Activated naive CD4-positive, alpha-beta T cell treated with anti-CD3 and anti-CD28 coated beads for 36 hours (primary cell): ENCODE measurements at regions of chr5 and their contacts with region 1.

Region 1: DNA sequence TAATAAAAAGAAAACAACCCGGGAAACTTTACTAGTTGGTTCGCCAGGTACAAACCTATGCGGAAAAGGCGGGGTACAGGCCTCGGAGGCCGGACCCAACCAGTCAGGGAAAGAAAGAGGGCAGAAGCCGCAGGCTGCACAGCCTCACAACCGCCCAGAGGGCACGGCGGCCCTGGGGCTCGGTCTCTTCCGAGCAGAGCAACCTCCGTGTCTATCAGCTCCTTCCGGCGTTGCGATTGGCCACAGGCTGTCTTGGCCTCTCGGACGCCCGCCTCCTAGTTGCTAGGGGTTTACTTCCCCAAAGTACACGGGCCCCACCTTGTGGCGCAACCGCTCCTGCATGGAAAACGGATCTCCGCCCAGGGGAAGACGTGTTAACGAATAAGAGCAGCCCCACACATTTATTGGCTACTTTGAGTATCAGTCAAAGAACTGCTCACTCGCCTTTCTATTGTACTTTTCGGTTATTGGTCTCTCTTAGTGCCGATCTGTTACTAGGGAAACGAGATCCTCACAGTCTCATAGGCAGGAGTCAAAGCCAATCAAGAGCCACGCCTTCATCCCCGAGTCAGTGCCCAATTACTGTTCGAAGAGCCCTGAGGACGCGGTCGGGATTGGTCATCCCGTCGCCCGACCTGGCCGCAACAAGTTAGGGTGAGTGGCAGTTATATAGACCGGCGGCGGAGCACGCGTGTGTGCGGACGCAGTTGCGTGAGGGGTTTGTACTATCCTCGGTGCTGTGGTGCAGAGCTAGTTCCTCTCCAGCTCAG is at the start of gene G3BP1:
- DNase-seq: peak; percentile 100
- H3K4me3 Mint-ChIP-seq: peak within 1 kb of the TSS; percentile 77
- H3K27ac Mint-ChIP-seq: peak within 1 kb of the TSS; percentile 70
- H3K4me1 Mint-ChIP-seq: peaks cover 33% of the 10 kb centered on the region
- H3K27me3 Mint-ChIP-seq: no peaks in the 10 kb centered on the region
- total RNA-seq, gene G3BP1: 220 to 241 TPM

Region 2: DNA sequence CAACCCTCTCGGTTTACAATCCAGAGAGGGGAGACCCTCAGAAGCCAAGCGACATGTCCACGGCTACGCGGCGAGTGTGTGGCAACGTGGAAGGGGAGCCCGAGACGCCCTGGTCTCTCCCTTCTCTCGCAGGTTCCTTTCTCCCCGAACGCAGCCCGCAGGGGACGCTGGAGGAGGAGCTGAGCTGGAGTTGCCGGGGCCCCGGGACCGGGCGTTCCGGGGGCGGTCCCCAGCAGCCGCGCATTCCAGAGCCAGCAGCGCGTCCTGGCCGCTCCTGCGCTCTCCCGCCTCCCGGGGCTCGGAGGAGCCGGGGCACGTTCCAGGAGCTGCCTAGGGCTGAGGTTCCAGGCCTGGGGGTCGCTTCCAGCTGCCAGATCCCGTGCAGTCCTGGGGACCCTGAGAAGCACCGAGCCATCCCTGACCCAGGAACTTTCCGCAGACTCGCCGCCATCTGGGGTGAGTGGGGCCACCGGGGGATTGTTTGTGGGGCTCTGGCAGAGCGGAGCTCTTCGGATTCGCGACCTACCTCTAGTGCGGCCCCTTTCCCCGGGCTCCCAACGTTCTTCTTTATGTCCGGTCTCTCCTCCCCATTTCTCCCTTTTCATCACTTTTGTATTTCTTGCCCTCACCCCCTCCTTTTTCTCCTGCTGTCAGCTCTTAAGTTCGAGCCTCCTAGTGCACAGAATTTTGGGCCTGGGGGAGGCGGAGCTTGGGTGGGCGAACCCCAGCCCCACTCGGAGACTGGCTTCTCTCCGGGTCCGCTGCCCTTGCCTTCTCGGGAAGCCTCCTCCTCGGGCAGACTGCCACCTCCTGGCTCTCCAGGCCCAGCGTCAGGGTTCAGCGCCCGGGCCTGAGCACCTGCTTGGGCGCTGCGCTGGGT is 992.7 kb before region 1 on chr5 and contains the start of gene SMIM3:
- CTCF ChIA-PET with region 1: no interaction called
- intact Hi-C with region 1: loop called (anchors 5 kb)
- DNase-seq: peak; percentile 86
- H3K4me3 Mint-ChIP-seq: peak within 1 kb of the TSS; percentile 99
- H3K27ac Mint-ChIP-seq: peak within 1 kb of the TSS; percentile 93
- H3K4me1 Mint-ChIP-seq: peaks cover 48% of the 10 kb centered on the region
- H3K27me3 Mint-ChIP-seq: no peaks in the 10 kb centered on the region
- total RNA-seq, gene SMIM3: 32.9 to 37.4 TPM

Region 3: GRCh38 chr5:151252762-151253604 is 518.5 kb before region 1 on chr5 and contains the start of gene GM2A:
- CTCF ChIA-PET with region 1: no interaction called
- intact Hi-C with region 1: loop called (anchors 1 kb)
- DNase-seq: peak; percentile 99
- H3K4me3 Mint-ChIP-seq: peak within 1 kb of the TSS; percentile 89
- H3K27ac Mint-ChIP-seq: peak within 1 kb of the TSS; percentile 90
- H3K4me1 Mint-ChIP-seq: peaks cover 43% of the 10 kb centered on the region
- H3K27me3 Mint-ChIP-seq: no peaks in the 10 kb centered on the region
- total RNA-seq, gene GM2A: 21.1 to 21.8 TPM

Region 4: DNA sequence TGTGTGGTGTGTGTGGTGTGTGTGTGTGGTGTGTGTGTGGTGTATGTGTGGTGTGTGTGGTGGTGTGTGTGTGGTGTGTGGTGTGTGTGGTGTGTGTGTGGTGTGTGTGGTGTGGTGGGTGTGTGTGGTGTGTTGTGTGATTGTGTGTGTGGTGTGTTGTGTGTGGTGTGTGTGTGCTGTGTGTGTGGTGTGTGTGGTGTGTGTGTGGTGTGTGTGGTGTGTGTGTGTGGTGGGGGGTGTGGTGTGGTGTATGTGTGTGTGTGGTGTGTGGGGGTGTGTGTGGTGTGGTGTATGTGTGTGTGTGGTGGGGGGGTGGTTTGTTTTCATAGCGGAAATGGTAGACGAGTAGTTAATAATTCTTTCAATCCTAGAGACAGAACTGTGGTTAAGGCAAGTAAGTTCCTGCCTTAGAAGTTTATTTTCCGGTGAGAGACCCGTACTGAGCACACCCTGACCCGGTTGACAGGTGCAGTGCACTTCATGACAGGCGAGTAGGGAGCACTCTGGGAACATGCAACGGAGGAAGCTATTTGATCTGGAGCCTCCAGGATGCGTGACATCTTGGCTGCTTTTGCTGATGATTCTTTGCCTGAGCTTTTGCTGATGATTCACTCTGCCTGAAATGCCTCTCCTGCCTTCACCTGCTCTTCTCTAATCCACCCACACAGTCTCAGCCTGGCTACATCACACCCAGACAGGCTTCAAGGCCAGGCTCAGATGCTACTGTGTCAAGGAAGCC is 158.6 kb before region 1 on chr5:
- CTCF ChIA-PET with region 1: interaction called, 3 read pairs
- intact Hi-C with region 1: loop called (anchors 2 kb)
- DNase-seq: peak; percentile 82
- H3K4me3 Mint-ChIP-seq: no peak overlapping the region
- H3K27ac Mint-ChIP-seq: peak overlapping the region; percentile 80
- H3K4me1 Mint-ChIP-seq: peaks cover 39% of the 10 kb centered on the region
- H3K27me3 Mint-ChIP-seq: no peaks in the 10 kb centered on the region

Region 5: GRCh38 chr5:151719228-151720000 is 52.0 kb before region 1 on chr5:
- CTCF ChIA-PET with region 1: interaction called, 5 read pairs
- intact Hi-C with region 1: loop called (anchors 1 kb)
- DNase-seq: peak; percentile 55
- H3K4me3 Mint-ChIP-seq: no peak overlapping the region
- H3K27ac Mint-ChIP-seq: no peak overlapping the region
- H3K4me1 Mint-ChIP-seq: peaks cover 12% of the 10 kb centered on the region
- H3K27me3 Mint-ChIP-seq: no peaks in the 10 kb centered on the region

Region 6: DNA sequence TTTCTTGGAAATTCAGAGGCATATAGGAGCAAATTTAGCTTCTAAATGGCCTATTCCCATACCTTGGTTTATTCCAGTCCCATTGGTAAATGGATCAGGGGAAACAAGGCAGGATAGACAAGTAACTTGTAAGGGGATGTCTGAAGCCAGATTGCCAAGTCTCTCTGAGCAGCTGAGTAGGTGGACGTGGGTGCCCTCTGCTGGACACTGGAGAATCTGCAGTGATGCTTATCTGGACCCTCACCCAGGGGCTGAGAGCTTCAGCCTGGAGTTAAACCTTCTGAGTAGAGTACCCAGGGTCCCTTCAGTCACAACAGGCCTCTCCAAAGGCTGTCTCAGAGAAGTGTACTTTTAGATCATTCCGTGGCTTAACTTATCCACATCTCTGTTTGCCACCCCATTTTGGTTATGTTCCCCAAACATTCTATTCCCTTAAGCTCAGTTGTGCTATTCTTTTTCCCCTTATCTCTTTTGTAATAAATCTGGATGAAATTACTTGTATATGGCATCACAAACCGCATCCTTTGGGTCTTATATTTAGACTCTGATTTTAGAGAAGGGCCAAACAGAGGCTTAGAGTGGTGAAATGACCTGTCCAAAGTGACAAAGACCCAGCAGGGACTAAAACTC is 371.5 kb after region 1 on chr5:
- CTCF ChIA-PET with region 1: no interaction called
- intact Hi-C with region 1: loop called (anchors 2 kb)
- DNase-seq: peak; percentile 77
- H3K4me3 Mint-ChIP-seq: no peak overlapping the region
- H3K27ac Mint-ChIP-seq: no peak overlapping the region
- H3K4me1 Mint-ChIP-seq: no peaks in the 10 kb centered on the region
- H3K27me3 Mint-ChIP-seq: no peaks in the 10 kb centered on the region